ENCODE measurements at regions of chr7 and their contacts with region 1.

Region 1: GRCh38 chr7:16645593-16646471 is at the starts of genes ANKMY2 and BZW2:
- DNase-seq: peak; percentile 93
- H3K4me3 Mint-ChIP-seq: peak within 1 kb of the TSS; percentile 98
- H3K27ac Mint-ChIP-seq: peak within 1 kb of the TSS; percentile 100
- H3K4me1 Mint-ChIP-seq: peaks cover 60% of the 10 kb centered on the region
- H3K27me3 Mint-ChIP-seq: no peaks in the 10 kb centered on the region
- total RNA-seq, gene ANKMY2: 6.9 and 8.4 TPM in 2 replicates
- total RNA-seq, gene BZW2: 94.3 and 101 TPM in 2 replicates

Region 2: GRCh38 chr7:16504016-16504415 is 141.8 kb before region 1 on chr7:
- intact Hi-C with region 1: no loop called
- DNase-seq: no peak
- H3K4me3 Mint-ChIP-seq: no peak overlapping the region
- H3K27ac Mint-ChIP-seq: no peak overlapping the region
- H3K4me1 Mint-ChIP-seq: no peaks in the 10 kb centered on the region
- H3K27me3 Mint-ChIP-seq: no peaks in the 10 kb centered on the region

Region 3: GRCh38 chr7:16528520-16528919 is 117.3 kb before region 1 on chr7:
- intact Hi-C with region 1: no loop called
- DNase-seq: no peak
- H3K4me3 Mint-ChIP-seq: no peak overlapping the region
- H3K27ac Mint-ChIP-seq: no peak overlapping the region
- H3K4me1 Mint-ChIP-seq: no peaks in the 10 kb centered on the region
- H3K27me3 Mint-ChIP-seq: peaks cover 2% of the 10 kb centered on the region

Region 4: GRCh38 chr7:16619979-16620408 is 25.8 kb before region 1 on chr7:
- intact Hi-C with region 1: loop called (anchors 1 kb)
- DNase-seq: no peak
- H3K4me3 Mint-ChIP-seq: peak overlapping the region; percentile 44
- H3K27ac Mint-ChIP-seq: peak overlapping the region; percentile 72
- H3K4me1 Mint-ChIP-seq: peaks cover 18% of the 10 kb centered on the region
- H3K27me3 Mint-ChIP-seq: no peaks in the 10 kb centered on the region

Region 5: DNA sequence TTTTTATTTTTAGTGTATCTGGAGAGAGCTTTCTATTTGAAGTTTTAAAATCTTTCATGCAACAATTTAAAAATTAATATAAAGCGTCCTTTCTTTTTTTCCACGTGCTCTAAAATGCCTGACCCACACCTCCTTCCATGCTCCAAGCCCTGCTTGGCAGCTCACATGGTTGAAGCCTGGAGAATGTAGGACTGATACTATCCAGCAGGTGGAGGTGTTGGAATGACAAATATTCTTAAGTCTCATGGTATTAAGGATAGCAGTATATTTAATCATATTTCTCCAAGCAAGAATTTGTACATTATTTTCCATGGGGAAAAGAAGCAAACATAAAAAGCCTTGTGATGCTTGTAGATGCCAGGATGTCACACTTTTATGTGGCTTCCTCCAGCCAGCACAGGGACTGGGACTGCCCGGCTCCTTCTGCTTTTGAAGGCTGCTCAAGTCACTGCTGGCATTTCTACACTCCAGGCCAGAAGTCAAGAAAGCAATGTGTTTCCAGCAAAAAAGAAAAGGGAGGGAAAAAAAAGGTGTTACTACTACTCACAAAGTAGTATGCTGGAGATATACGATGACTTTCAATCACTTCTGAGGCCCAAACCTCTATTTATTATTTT is 49.9 kb after region 1 on chr7:
- intact Hi-C with region 1: loop called (anchors 2 kb)
- DNase-seq: no peak
- H3K4me3 Mint-ChIP-seq: no peak overlapping the region
- H3K27ac Mint-ChIP-seq: no peak overlapping the region
- H3K4me1 Mint-ChIP-seq: no peaks in the 10 kb centered on the region
- H3K27me3 Mint-ChIP-seq: no peaks in the 10 kb centered on the region

Region 6: GRCh38 chr7:16753102-16753931 is 107.5 kb after region 1 on chr7 and contains the start of gene TSPAN13:
- intact Hi-C with region 1: loop called (anchors 2 kb)
- DNase-seq: peak; percentile 60
- H3K4me3 Mint-ChIP-seq: peak within 1 kb of the TSS; percentile 78
- H3K27ac Mint-ChIP-seq: peak within 1 kb of the TSS; percentile 42
- H3K4me1 Mint-ChIP-seq: peaks cover 15% of the 10 kb centered on the region
- H3K27me3 Mint-ChIP-seq: peaks cover 43% of the 10 kb centered on the region
- total RNA-seq, gene TSPAN13: 0.96 and 1.3 TPM in 2 replicates

Region 7: GRCh38 chr7:17940302-17940883 is 1294.6 kb after region 1 on chr7 and contains the start of gene SNX13:
- intact Hi-C with region 1: loop called (anchors 2 kb)
- DNase-seq: peak; percentile 86
- H3K4me3 Mint-ChIP-seq: peak within 1 kb of the TSS; percentile 92
- H3K27ac Mint-ChIP-seq: peak within 1 kb of the TSS; percentile 93
- H3K4me1 Mint-ChIP-seq: peaks cover 36% of the 10 kb centered on the region
- H3K27me3 Mint-ChIP-seq: peaks cover 7% of the 10 kb centered on the region
- total RNA-seq, gene SNX13: 27.3 and 27.6 TPM in 2 replicates